ENCODE measurements at regions of chr9 and their contacts with region 1.

Region 1: DNA sequence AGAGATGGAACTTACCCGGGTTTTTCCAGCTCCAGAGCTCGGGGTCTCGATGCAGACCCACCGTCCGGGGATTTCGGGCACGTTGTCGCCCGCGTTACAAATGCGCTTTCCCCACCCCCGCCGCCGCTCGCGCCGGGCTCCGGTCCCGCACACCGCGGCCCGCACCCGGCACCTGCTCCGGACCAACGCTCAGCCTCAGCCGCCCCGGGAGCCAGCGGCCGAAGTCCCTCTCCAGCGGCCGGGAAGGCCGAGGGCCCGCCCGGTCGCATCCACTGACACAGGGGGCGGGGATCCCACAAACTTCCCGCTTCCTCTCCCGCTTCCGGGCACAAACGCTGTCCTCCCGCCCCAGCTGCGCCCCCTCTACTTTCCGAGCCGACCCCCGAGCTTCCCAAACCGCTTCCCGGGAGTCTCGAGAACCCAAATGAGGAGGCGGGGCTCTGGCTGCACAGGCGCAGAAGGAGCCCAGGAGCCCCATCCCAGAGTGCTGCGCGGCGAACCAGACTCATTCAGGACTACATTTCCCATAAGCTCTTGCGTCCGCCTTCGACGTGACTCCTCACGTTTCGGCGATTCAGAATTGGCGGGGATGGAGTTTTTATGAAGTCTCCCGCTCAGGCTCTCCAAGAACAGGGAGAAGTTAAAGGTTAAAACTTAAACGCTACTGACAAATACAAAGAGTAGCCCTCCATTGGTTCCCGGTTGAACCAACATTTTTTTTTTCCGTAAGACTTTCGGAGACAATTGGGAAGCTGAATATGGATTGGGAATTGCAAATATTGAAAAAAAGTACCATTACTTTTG is at the start of gene ZNF782:
- DNase-seq: peak; percentile 97
- H3K4me3 ChIP-seq: peak within 1 kb of the TSS; percentile 76
- H3K27ac ChIP-seq: peak within 1 kb of the TSS; percentile 13
- H3K4me1 ChIP-seq: peaks cover 8% of the 10 kb centered on the region
- H3K27me3 ChIP-seq: no peaks in the 10 kb centered on the region
- CTCF ChIP-seq: no peak
- total RNA-seq, gene ZNF782: 4.5 TPM

Region 2: DNA sequence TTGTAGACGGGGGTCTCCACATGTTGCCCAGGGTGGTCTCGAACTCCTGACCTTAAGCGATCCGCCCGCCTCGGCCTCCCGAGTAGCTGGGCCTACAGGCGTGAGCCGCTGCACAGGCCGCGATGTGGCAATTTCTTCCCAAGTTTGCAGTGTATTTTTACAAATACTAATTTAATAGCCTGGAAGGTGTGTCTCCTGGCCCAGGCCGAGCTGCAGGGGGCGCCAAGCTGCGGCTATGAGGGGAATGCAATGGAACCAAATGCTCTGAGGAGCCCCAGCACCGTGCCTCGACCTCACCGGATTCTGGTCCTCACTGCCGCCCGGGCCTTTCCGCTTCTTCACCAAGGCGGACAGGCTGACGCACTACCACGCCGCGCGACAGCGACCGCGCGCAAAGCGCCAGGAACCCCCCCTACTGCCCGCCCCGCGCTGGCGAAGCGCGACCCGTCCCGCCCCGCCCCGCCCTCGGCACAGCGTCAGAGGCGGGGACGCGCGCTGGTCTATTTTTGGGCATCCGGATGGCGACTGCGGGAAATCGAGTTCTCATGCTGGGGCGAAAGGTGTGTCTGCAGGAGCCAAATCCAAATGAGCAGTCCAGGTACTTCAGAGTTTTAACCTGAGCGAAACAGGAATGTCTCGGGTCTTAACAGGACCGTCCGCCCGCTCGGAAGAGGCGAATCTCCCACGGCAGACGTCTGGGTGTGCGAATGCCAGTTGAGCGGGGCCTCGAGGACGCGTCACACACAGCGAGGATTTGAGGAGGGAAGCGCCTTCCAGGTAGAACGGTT is 167.5 kb before region 1 on chr9:
- intact Hi-C with region 1: loop called (anchors 5 kb)
- DNase-seq: peak; percentile 76
- H3K4me3 ChIP-seq: peak overlapping the region; percentile 32
- H3K27ac ChIP-seq: peak overlapping the region; percentile 9
- H3K4me1 ChIP-seq: no peaks in the 10 kb centered on the region
- H3K27me3 ChIP-seq: no peaks in the 10 kb centered on the region
- CTCF ChIP-seq: peak; percentile 34

Region 3: DNA sequence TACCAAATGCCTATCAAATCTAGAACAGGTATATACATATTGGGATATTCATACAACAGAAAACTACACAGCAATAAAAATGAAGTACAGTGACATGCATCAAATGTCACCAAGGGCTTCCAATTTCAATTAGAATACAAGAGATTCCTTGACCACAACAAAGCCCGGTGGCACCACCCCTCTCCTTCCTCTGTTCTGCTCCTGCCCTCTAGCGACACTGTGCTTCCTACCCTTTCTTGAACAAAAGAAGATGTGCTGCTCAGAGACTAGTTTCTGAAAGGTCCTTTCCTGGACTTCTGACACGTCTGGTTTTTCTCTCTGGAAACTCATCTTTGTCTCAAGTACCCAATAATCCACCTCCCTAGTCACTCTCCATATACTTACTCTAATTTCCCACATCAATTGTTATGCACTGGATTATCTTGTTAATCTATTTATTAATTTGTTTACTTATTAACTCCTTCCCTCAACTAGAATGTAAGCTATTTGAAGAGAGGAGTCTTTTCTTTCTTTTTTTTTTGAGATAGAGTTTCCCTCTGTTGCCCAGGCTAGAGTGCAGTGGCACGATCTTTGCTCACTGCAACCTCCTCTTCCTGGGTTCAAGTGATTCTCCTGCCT is 255.0 kb after region 1 on chr9:
- intact Hi-C with region 1: loop called (anchors 5 kb)
- DNase-seq: peak; percentile 66
- H3K4me3 ChIP-seq: no peak overlapping the region
- H3K27ac ChIP-seq: no peak overlapping the region
- H3K4me1 ChIP-seq: no peaks in the 10 kb centered on the region
- H3K27me3 ChIP-seq: no peaks in the 10 kb centered on the region
- CTCF ChIP-seq: peak; percentile 55

Region 4: DNA sequence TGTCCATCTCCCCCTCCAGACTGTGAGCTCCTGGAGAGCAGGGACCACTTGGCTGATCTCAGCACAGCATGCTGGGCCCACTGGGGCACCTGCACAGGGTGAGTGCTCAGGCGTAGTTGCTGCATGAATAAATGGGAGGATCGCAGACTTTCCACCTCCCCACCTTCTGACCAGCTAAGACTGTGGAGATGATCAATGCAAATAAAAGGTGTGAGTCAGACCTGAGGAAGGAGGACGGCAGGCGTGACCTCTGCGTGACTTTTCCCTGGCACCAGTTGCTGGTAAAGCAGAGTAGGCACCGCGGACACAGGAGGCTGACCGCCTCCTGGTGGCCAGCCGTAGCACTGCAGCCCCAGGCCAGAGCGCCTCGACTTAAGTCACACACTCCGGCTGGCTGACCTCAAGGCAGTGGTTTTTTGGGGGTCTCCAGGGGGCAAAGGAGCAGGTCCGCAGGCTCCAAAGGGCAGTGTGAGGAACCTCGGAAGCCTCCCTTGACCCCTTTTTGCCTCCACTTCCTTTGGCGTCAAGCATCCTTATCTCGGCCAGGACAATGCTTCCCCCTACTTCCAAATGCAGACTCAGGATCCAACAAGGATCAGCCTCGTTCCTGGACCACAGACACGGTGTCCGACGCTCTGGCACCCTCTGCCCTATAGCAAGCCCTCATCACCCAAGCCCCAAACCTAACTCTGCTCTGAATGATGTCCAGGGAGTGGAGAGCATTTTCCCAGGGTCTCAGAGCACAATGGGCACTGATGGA is 544.9 kb after region 1 on chr9:
- intact Hi-C with region 1: loop called (anchors 5 kb)
- DNase-seq: peak; percentile 82
- H3K4me3 ChIP-seq: no peak overlapping the region
- H3K27ac ChIP-seq: no peak overlapping the region
- H3K4me1 ChIP-seq: no peaks in the 10 kb centered on the region
- H3K27me3 ChIP-seq: no peaks in the 10 kb centered on the region
- CTCF ChIP-seq: peak; percentile 97

Measured in colonic mucosa (tissue), 4 donors.